ENCODE measurements at regions of chr6 and their contacts with region 1.

Region 1: GRCh38 chr6:25537349-25538018 is 114.5 kb upstream of the SCGN start:
- DNase-seq: no peak
- CTCF ChIP-seq: no peak

Region 2: DNA sequence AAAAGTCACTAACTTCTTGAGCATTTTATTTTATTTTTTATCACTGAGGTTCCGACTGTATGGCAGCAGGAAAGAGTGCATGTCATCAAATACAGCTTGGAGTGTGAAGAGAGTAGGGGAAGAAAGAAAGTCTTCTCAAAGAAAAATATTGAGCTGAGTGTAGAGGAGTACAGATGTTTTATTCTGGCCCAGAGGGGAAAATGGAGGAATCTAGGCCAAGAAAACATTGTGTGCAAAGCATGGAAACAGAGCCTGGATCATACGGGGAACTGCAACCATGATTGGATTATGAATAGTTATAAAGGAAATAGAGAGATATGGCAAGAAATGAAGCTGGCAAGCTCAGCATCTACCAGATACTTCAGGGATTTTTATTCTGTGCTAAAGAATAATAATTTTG is 10.3 kb after region 1 on chr6:
- CTCF ChIA-PET with region 1: interaction called, 12 read pairs
- POLR2A ChIA-PET with region 1: no interaction called
- DNase-seq: no peak
- CTCF ChIP-seq: no peak